ENCODE measurements at regions of chr3 and their contacts with region 1.

Region 1: DNA sequence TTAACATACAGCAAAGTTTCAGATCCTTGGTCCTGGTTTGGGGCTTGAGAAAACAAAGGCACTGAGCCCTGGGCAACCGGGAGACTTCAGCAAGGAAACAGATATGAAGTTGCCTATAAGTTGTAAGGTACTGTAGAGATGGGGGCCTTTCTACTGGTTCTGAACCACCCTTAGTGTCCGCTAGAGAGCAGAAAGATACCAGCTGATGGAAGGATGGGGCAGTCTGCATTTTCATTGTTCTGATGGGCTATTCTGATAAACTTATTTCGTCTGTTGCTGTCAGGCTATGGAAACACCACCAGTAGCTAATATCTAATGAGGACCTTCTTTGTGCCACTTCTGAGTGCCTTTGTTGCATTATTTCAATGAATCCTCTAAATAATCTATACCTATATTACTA is 38.7 kb downstream of the FGD5 start:
- DNase-seq: no peak
- H3K4me3 ChIP-seq: no peak overlapping the region
- H3K27ac ChIP-seq: no peak overlapping the region
- H3K4me1 ChIP-seq: no peaks in the 10 kb centered on the region
- H3K27me3 ChIP-seq: no peaks in the 10 kb centered on the region
- CTCF ChIP-seq: peak; percentile 20

Region 2: DNA sequence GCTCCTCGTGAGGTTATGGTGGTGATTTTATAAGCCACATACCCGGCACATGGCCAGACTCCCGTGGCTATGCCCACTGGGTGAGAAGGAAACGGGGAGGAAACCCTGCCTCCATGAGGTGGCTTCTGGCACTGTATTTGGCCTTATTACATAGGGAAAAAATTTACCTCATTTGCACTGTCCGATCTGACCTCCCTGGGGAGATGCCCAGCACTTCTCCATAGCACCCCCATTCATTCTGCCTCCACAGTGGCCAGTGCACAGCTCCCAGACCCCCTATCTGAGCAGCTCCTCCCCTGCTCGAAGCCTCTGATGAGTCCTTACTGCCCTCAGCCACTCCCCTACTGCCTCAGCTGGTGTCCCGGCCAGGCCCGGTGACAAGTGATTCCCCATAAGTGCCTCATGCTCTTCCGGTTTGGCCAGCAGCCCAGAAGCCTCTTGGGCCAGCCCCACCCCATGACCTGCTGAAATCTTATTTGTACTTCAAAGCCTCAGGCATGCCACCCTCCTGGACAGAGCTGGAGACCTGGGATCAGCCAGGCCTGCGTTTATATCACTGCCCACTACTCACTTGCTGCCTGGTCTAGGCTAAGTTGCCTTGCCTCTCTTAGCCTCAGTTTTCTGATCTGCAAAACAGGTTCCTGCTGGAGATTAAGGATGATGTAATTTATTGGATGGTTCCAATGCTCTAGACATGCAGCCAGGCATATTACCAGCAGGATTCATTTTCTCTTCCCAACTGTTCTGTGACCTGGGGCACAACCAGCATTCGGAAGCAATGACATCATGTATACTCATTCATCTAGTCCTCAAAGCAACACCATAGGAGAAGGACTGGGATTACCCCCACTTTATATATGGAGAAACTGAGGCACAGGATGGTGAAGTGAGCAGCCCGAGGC is 485.7 kb before region 1 on chr3:
- intact Hi-C with region 1: no loop called
- DNase-seq: peak; percentile 92
- H3K4me3 ChIP-seq: no peak overlapping the region
- H3K27ac ChIP-seq: no peak overlapping the region
- H3K4me1 ChIP-seq: peaks cover 14% of the 10 kb centered on the region
- H3K27me3 ChIP-seq: no peaks in the 10 kb centered on the region
- CTCF ChIP-seq: no peak

Region 3: GRCh38 chr3:14915636-14916222 is 58.2 kb after region 1 on chr3:
- intact Hi-C with region 1: loop called (anchors 5 kb)
- DNase-seq: no peak
- H3K4me3 ChIP-seq: no peak overlapping the region
- H3K27ac ChIP-seq: no peak overlapping the region
- H3K4me1 ChIP-seq: no peaks in the 10 kb centered on the region
- H3K27me3 ChIP-seq: no peaks in the 10 kb centered on the region
- CTCF ChIP-seq: no peak